ENCODE measurements at regions of chr17 and their contacts with region 1.

Region 1: DNA sequence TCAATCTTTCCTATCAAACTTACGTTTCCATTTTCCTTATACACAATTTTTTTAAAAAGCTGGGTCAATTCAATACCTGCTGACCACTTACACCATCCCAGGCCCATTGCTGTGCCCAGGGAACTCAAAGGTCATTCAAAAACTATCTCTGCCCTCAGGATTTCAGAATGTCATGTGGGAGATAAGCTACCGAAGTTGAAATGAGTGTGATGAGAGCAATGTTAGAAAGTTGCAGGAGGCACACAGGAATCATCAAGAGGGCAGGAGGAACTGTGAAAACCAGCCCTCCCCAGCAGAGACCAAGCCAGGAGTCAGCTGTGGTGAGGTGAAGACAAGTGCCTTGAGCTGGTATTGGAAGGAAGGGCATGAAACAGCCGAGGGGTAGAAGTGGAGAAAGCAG is 195.9 kb downstream of the HS3ST3A1 start:
- DNase-seq: no peak
- ATAC-seq: peak; percentile 69

Region 2: DNA sequence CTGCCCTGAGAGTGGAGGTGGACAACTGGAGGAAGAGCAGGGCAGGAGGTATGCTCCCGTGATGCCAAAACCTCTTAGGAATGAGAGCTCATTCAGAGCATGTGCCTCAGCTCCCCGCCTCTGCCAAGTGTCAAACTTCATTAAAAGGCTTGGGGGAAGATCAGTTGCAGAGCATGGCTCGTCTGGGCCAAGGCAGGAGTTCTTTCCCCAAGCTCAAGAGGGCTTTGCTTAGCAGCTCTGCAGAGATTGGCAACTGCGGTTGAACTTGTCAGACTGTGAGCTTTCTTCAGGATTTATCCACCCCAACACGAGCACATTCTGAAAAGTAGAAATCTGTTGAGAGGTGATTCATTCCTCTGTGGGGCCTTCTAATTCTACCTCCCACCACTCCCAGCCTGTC is 52.2 kb before region 1 on chr17:
- intact Hi-C with region 1: loop called (anchors 5 kb)
- DNase-seq: no peak
- ATAC-seq: peak; percentile 86

Region 3: GRCh38 chr17:13477180-13477611 is 71.4 kb after region 1 on chr17:
- intact Hi-C with region 1: no loop called
- DNase-seq: no peak
- ATAC-seq: no peak

Measured in Right ventricle myocardium inferior (tissue), 1 donor.